Activated T-helper 1 cell treated with anti-CD3 and anti-CD28 coated beads, Interleukin-12 subunit alpha, Interleukin-12 subunit beta, Interleukin-2, Interleukin-4 antibody, amounts not matched to agents 30 ng/mL and 10 ng/mL and 1 ng/mL, durations not matched to agents 14 hours and 24 hours and 36 hours (primary cell): ENCODE measurements at regions of chr9 and their contacts with region 1.

Region 1: GRCh38 chr9:36572515-36573418 is at the start of gene MELK:
- DNase-seq: peak; percentile 86
- H3K4me3 Mint-ChIP-seq: peak within 1 kb of the TSS; percentile 97
- H3K27ac Mint-ChIP-seq: peak within 1 kb of the TSS; percentile 91
- H3K4me1 Mint-ChIP-seq: peaks cover 26% of the 10 kb centered on the region
- H3K27me3 Mint-ChIP-seq: peaks cover 2% of the 10 kb centered on the region
- total RNA-seq, gene MELK: 46.4 and 48.3 TPM in 2 replicates

Region 2: DNA sequence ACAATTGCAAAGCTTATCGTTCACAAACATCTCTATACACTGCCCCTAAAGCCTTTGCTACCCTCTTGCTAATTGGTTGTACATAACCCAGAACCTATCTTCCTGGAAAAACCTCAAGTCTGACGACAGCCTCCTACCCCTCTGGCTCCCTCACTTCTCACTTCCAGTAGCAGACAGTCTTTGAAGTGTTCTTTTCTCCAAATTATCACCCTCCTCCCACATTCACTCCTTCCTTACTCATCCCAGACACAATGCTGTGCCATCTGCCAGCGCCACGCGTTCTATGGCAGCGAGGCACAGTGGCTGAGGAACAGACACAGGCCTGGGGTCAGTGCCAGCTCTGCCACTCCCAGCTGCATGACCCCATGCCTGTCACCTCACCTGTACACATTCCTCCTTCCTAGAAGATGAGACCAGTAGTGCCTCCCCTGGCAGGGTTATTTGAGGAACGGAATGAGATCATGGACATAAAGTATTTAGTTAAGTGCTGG is 354.3 kb before region 1 on chr9:
- intact Hi-C with region 1: loop called (anchors 10 kb)
- DNase-seq: peak; percentile 17
- H3K4me3 Mint-ChIP-seq: peak overlapping the region; percentile 71
- H3K27ac Mint-ChIP-seq: peak overlapping the region; percentile 90
- H3K4me1 Mint-ChIP-seq: peaks cover 37% of the 10 kb centered on the region
- H3K27me3 Mint-ChIP-seq: no peaks in the 10 kb centered on the region

Region 3: GRCh38 chr9:36400332-36401163 is 172.2 kb before region 1 on chr9:
- intact Hi-C with region 1: loop called (anchors 1 kb)
- DNase-seq: peak; percentile 86
- H3K4me3 Mint-ChIP-seq: peak overlapping the region; percentile 89
- H3K27ac Mint-ChIP-seq: peak overlapping the region; percentile 97
- H3K4me1 Mint-ChIP-seq: peaks cover 47% of the 10 kb centered on the region
- H3K27me3 Mint-ChIP-seq: no peaks in the 10 kb centered on the region

Region 4: DNA sequence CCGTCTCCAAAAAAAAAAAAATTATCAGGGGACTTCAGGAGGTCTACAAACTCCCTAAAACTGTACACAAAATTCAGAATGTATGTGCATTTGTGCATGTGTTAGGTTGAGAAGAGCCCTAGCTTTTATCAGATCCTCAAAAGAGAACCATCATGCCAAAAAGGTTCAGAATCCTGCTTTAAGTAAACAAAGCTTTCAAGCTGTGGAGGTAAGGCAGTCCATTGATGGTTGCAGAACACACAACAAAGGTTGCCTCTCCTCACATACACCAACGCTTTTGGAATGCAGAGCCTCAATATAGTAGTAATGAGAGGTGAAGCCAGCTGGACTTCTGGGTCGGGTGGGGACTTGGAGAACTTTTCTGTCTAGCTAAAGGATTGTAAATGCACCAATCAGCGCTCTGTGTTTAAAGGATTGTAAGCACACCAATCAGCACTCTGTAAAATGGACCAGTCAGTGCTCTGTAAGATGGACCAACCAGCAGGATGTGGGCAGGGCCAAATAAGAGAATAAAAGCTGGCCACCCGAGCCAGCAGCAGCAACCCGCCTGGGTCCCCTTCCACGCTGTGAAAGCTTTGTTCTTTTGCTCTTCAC is 114.8 kb before region 1 on chr9:
- intact Hi-C with region 1: loop called (anchors 2 kb)
- DNase-seq: no peak
- H3K4me3 Mint-ChIP-seq: peak overlapping the region; percentile 48
- H3K27ac Mint-ChIP-seq: peak overlapping the region; percentile 69
- H3K4me1 Mint-ChIP-seq: peaks cover 51% of the 10 kb centered on the region
- H3K27me3 Mint-ChIP-seq: no peaks in the 10 kb centered on the region

Region 5: DNA sequence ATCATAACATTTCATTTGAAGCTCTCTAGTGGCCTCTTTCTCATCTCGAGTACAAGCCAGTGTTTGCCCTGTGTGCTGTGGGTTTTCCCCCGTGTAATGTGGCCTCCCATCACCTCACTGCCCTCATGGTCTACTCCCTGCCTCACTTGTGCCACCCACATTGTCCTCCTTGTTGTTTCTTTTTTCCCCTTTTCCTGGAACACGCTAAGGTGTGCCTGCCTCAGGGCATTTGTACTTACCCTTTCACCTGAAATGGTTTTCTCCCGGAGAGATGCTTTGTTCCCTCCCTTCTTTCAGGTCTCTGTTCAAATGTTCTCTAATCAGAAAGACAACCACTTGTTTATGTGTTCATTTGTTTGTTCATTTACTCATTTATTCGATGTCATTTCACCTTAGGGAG is 40.2 kb after region 1 on chr9:
- intact Hi-C with region 1: no loop called
- DNase-seq: no peak
- H3K4me3 Mint-ChIP-seq: no peak overlapping the region
- H3K27ac Mint-ChIP-seq: peak overlapping the region; percentile 46
- H3K4me1 Mint-ChIP-seq: peaks cover 8% of the 10 kb centered on the region
- H3K27me3 Mint-ChIP-seq: no peaks in the 10 kb centered on the region

Region 6: DNA sequence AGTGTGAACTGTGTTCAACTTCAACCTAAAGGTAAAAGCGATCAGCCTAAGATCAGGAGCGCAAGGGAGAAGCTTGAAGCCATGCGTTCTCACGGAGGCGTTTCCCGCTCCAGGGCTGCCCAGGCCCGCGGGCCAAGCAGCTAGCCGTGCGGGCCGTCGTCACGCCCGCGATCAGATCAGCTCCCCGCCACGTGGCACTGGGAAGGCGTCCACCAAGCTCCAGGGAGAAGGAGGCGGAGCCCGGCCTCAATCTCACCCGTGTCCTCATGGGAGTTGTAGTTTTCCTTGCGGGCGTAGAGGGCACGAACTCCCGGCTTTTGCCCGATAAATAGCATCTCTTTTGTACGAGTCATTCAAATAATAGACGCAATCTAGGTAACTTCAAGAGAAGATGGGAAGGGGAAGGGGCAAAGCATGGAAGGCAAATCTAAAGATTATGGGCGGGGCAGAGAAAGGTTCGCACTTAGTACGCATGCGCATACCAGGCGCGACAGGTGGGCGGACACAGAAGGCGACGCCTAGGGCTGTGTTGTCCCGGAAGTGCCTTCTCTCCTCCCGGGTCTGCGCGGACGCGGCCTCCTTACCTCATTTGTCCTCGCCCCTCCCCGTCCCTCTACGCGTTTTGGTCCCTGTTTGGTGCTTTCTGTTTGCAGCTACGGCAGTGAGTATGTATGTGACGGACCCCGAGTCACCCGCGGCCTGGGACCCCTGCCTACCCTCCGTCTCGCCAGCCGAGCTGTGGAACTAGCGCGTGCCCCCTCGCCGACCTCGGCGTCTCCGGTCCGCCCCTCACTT is 506.8 kb after region 1 on chr9:
- intact Hi-C with region 1: loop called (anchors 10 kb)
- DNase-seq: peak; percentile 92
- H3K4me3 Mint-ChIP-seq: peak overlapping the region; percentile 95
- H3K27ac Mint-ChIP-seq: peak overlapping the region; percentile 97
- H3K4me1 Mint-ChIP-seq: peaks cover 44% of the 10 kb centered on the region
- H3K27me3 Mint-ChIP-seq: peaks cover 2% of the 10 kb centered on the region